Colonic mucosa (tissue), 4 donors: ENCODE measurements at regions of chr16 and their contacts with region 1.

Region 1: DNA sequence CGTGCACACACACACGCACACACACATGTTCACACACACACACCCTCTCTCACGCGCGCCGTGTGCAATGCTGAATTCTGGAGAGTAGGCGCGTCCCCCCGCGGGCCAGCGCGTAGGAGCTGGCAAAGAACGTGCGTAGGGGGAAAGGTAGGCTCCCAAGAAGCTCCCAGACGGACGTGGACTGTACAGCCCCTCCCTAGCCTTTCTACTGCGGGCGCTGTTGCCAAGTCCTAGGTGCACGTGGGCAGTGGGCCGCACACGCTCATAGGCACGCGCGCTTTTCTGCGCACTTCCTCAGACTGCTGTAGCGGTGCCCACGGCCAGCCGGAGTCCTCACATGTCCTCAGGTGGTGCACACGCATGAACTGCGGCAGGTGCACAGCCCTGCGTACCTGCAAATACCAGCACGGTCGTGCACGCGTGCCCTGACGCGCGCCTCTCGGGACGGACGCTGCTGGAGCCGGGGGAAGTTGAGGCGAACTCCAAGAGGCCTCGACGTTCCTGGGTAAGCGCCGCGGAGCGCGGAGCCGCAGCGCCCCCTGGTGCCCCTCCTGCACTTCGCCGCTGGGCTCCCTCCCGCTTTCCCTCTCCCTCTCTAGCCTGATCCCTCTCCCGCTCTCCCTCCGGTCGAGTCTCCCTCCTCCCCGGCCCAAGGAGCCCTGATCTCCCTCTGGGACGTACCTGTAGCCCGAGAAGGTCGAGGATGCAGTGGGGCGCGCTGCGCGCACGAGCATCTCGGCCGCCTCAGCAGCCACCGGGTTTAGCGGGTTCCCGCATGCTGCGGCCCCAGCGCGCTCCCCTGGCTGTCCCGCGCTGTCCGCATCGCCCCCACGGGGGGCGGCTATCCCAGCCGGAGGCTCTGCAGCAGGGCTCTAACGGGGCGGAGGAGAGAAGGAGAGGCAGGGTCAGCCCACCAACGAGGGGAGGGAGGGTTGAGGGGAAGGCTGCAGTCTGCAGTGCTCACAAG is 749 bp downstream of the GRIN2A start:
- DNase-seq: peak; percentile 27
- H3K4me3 ChIP-seq: no peak overlapping the region
- H3K27ac ChIP-seq: no peak overlapping the region
- H3K4me1 ChIP-seq: peaks cover 8% of the 10 kb centered on the region
- H3K27me3 ChIP-seq: peaks cover 23% of the 10 kb centered on the region
- CTCF ChIP-seq: peak; percentile 82

Region 2: DNA sequence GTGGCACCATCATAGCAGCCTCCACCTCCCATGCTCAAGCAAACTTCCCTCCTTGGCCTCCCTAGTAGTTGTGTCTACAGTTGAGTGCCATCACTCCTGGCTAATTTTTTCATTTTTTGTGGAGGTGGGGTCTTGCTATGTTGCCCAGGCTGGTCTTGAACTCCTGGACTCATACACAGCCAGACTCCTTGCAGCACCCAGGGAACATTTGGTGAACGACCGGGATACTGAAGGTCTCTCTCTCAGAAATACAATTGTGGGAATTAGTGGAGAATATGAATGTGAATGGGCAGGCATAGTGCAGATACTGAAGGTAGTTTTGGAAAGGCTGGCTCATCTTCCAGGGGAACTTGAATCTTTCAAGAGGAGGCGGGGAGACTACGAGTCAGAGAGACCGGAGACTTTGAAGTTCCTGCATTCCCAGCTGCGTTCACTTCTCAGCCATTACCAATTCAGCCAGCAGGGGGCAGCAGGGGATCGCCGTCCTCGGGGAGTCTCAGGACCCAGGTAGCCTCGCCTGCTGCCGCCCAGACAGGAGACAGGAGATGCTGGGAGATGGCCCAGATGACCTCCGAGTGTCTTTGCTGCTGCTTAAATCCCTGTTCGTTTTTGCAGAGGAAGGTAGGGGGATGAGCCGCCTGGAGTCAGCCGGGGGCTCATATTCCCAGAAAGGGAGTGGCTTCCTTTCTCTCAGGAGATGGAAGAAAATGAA is 1021.5 kb before region 1 on chr16:
- intact Hi-C with region 1: loop called (anchors 5 kb)
- DNase-seq: peak; percentile 67
- H3K4me3 ChIP-seq: no peak overlapping the region
- H3K27ac ChIP-seq: no peak overlapping the region
- H3K4me1 ChIP-seq: no peaks in the 10 kb centered on the region
- H3K27me3 ChIP-seq: no peaks in the 10 kb centered on the region
- CTCF ChIP-seq: peak; percentile 77

Region 3: DNA sequence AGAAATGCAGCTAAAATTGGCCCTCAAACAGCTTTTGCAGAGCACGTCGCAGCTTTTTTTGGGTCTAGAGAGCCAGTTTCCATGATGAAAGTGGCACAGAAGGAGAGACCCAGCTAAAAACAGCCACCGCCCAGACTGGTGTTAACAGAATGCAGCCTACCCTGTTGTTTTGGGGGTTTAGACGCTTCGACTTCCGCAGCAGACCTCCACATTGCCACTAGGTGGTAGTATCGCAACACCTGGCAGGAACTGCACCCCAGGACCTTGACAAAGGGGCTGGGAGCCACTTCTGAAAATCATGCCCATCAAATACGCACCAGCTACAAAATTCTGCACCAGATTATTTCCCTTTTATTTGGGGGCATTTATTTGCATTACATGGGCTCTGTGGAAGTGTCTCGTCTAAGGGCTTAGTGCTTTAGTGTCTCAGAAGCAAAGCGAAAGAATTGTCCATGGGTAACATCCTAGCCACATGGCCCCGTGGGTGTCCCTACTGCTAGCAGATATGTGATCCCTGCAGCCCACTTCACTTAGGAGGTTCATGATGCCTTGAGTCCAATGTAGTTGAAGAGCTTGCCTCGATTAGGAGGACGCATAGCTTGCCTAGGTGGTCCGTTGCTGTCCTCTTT is 922.9 kb before region 1 on chr16:
- intact Hi-C with region 1: loop called (anchors 10 kb)
- DNase-seq: peak; percentile 46
- H3K4me3 ChIP-seq: no peak overlapping the region
- H3K27ac ChIP-seq: no peak overlapping the region
- H3K4me1 ChIP-seq: no peaks in the 10 kb centered on the region
- H3K27me3 ChIP-seq: no peaks in the 10 kb centered on the region
- CTCF ChIP-seq: peak; percentile 51

Region 4: DNA sequence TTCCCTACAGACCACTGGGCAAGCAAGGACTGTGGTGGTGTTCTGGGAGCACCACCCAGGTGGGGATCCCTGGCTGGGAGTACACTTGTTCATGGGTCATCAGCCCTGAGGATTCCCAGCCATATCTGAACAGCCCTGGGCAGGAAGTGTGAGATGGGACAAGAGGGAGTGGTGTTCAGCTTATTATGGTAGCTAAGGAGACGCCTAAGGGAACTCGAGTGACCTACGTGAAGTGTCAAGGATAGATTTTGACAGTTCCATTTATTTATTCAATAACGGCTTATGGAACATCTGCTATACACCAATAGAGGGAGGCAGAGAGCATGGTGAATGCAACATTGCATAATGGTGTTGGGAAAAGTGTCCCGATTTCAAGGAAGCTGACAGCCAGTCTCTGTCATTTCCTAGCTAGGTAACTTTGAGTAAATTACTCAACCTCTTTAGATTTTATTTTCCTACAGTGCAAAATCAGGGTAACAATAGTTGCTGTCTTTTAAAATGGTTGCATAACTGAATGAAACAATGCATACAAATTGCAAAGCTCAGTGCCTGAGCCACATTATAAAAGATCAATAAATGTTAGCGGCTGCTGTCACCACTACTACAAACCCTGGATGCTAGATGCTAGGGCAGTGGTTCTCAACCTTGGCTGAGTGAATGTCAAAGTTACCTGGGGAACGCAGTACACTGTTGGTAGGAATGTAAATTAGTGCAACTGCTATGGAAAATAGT is 533.3 kb before region 1 on chr16:
- intact Hi-C with region 1: loop called (anchors 10 kb)
- DNase-seq: peak; percentile 26
- H3K4me3 ChIP-seq: no peak overlapping the region
- H3K27ac ChIP-seq: no peak overlapping the region
- H3K4me1 ChIP-seq: no peaks in the 10 kb centered on the region
- H3K27me3 ChIP-seq: no peaks in the 10 kb centered on the region
- CTCF ChIP-seq: peak; percentile 56

Region 5: GRCh38 chr16:10314811-10315210 is 133.3 kb after region 1 on chr16:
- intact Hi-C with region 1: no loop called
- DNase-seq: no peak
- H3K4me3 ChIP-seq: no peak overlapping the region
- H3K27ac ChIP-seq: no peak overlapping the region
- H3K4me1 ChIP-seq: no peaks in the 10 kb centered on the region
- H3K27me3 ChIP-seq: no peaks in the 10 kb centered on the region
- CTCF ChIP-seq: no peak